ENCODE measurements at regions of chr1 and their contacts with region 1.

Region 1: GRCh38 chr1:84143796-84144565 is at the start of gene PRKACB:
- DNase-seq: peak; percentile 84

Region 2: DNA sequence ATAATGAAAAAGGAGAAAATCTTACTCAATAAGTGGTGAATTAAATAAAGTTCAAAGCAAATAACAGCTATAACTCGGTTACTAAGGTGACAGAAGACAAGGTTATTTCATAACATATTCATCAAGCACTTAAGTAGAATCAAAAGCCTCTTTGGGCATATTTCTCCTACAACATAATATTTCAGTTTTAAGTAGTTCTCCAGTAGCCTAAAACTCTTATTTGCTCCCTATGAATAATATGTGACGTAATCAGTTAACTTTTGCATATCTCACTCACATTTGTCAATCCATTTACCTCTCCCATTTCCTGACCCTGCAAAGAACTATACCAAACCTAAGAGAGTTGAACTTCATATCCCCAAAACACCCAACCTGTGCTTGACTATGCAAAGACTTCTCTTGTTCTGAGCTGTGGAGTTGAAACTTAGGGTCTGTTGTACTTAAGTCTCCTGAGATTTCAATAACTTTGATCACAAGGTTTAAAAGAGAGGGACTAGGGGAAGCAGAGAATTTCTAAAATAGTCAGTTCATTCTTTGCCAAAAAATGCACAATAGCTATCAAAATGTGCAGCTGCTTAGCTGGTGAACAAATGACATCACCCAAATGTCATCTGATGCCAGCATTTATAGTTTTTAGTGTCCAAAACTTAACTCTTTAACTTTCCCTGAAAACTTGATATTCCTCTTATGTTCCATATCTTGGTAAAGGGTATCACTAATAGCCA is 182.2 kb before region 1 on chr1:
- in situ Hi-C with region 1: no loop called
- DNase-seq: no peak

Region 3: GRCh38 chr1:84301004-84301784 is 157.2 kb after region 1 on chr1 and contains the start of gene SAMD13:
- in situ Hi-C with region 1: loop called (anchors 25 kb)
- DNase-seq: peak; percentile 70

Region 4: GRCh38 chr1:84433258-84434080 is 289.5 kb after region 1 on chr1:
- in situ Hi-C with region 1: loop called (anchors 25 kb)
- DNase-seq: peak; percentile 85

Measured in KBM-7 (cell line).